GM18951 (cell line): ENCODE measurements at regions of chr4 and their contacts with region 1.

Region 1: GRCh38 chr4:41281038-41281634 is 24.4 kb downstream of the UCHL1 start:
- POLR2A ChIP-seq: no peak

Region 2: DNA sequence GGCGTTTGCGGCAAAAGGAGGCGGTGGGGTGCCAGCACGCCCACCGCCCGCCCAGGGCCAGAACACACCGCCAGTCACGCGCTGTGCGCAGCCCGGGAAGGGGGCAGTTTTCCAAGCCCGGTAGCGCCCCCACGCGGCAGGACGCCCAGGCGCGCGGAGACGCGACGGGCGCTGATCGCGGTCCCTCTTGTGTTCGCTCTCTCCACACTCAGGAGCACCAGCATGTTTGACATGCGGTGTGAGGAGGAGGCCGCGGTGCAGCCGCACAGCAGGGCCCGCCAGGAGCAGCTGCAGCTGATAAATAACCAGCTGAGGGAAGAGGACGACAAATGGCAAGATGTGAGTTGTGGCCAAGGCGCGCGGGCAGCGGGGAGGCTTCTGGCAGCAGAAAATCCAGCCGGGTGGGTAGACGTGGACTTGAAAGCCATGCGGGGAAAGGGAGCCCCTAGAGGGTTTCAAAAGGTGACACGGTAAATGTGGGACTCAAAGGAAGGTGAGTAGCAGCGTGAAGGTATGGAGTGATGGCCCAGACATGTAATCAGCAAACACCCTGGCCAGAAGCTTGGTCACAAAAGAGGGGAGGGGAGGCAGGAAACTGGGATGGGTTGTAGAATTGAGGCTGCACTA is 363.3 kb after region 1 on chr4:
- in situ Hi-C with region 1: loop called (anchors 25 kb)
- POLR2A ChIP-seq: no peak

Region 3: GRCh38 chr4:41882625-41883347 is 601.6 kb after region 1 on chr4:
- in situ Hi-C with region 1: loop called (anchors 25 kb)
- POLR2A ChIP-seq: no peak